ENCODE measurements at regions of chr3 and their contacts with region 1.

Region 1: GRCh38 chr3:178320456-178321351 is 215.5 kb upstream of the KCNMB2 start:
- ATAC-seq: peak; percentile 73 to 100 (median 94)
- H3K4me3 ChIP-seq: no peak overlapping the region
- H3K27ac ChIP-seq: peak overlapping the region in 1 of 2 donors; percentile 4
- H3K4me1 ChIP-seq: peaks cover 24 to 32% of the 10 kb centered on the region in 2 donors

Region 2: DNA sequence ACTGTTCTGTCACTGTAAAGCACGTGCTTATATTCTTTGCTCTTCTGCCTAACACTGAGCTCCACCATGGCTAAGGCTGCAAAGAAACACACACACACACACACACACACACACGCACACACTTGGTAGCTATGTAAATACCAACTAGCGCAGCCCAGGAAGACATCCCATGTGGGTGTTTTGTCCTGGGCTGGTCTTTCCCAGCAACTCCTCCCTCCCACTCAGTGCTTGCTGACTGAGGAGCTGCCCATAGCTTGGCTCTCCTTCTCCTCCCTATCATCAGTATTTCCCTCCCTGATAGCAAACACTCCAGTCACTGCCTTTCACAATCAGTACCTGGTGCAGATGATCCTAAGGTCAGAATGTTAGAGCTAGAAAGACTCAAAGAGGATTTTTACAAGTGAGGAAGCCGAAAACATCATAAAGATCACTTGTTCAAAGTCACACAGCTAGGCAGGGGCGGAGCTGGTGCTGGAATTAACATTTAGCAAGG is 746.4 kb before region 1 on chr3:
- in situ Hi-C with region 1: no loop called
- ATAC-seq: peak; percentile 90 to 99 (median 98)
- H3K4me3 ChIP-seq: no peak overlapping the region
- H3K27ac ChIP-seq: no peak overlapping the region
- H3K4me1 ChIP-seq: peaks cover 8 to 14% of the 10 kb centered on the region in 2 donors

Region 3: DNA sequence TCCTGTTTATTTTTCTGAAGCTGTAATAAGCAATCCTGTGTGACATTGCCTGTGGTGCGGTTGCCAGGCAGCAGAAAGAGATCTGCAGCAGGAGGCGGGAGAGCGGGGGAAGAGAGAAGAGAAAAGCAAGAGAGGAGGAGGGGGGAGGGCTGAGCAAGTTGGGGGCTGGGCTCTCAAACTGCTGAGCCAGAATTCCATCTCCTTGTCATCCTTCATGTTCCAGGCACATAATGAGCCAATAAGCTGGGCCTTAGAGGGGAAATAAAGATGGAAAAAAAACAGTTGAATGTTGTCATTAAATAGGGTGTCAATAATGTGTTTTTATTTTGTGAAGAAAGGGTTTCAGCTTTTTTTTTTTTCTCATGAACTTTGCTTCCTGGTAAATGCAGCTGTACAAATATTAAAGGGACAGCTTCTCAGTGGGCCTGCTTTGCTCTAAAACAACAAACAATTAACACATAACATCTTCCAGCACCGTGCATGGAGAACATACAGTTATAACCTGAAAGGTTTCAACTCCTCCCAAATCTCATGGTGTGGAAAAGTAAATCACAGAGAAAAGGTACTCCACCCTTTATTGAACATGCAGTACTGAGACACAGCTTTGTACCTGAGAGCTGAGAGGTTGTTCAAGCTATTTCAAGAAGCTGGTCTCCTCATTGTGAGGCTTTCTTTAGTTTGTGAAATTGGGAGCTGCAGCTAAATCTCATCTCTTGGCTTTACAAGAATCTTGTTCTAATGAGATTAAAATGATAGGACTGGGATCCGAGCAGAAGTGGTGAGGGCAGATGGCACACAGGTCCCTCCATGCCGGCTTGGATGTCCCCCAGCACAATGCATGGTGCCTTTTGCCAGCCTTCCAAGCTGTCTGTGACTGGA is 235.5 kb before region 1 on chr3:
- in situ Hi-C with region 1: loop called in 1 of 9 experiments (anchors 25 kb)
- ATAC-seq: peak in 7 of 8 experiments; percentile 44 to 94 (median 90)
- H3K4me3 ChIP-seq: no peak overlapping the region
- H3K27ac ChIP-seq: peak overlapping the region; percentile 44 to 66
- H3K4me1 ChIP-seq: peaks cover 41 to 58% of the 10 kb centered on the region in 2 donors

Measured in motor neuron (in vitro differentiated cells).